ENCODE measurements at regions of chr11 and their contacts with region 1.

Region 1: DNA sequence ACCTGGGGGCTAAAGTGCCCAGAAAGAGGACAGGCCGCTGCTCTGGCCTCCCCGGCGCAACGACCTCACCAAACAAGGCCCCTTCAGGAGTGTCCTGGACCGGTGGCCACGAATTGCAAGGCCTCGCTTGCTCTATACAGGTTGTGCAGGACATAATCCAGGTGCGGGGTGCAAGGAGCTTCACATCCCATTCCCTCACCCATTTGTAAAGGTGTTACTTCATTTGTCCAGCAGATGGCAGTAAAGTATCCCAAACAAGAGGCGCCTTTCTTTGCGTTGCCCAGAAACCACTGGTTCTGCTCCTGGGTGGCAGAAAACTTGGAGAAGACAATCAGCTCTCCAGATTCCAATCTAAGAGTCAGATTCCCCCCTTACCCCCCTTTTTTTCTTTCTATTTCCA is 35.9 kb upstream of the PRDM11 start:
- DNase-seq: no peak
- ATAC-seq: peak; percentile 81
- H3K4me3 ChIP-seq: no peak overlapping the region
- H3K27ac ChIP-seq: no peak overlapping the region
- H3K4me1 ChIP-seq: no peaks in the 10 kb centered on the region
- H3K27me3 ChIP-seq: no peaks in the 10 kb centered on the region

Region 2: DNA sequence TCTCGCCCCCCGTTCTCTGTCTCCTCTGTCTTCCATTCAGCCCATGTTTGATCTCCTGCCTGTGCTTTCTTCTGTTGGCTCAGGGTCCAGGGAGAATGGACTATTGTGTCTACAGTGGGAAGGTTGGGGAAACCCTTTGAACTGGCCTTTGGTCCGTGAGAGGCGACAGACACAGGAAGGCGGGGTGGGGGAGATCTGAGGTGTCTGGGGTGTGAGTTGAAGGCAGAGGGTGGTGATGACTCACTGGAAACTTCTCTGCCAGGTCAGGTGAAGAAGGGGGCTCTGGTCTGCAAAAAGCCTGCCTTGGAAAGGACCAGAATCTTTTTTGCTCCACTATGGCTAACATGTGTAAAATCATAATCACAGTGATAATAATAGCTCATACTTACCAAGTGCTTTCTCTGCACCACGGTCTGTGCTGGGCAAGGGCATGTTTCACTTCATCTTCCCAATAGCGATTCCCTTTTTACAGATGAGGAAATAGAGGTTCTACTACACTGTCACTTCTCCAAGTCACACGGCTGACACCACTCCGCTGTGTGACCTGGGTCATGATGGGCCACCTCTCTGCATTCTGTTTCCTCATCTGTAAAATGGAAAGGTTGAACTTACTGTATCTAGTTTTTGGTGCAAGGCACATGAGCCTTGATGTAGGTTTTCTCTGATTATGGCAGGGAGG is 700.9 kb before region 1 on chr11:
- intact Hi-C with region 1: no loop called
- DNase-seq: no peak
- ATAC-seq: no peak
- H3K4me3 ChIP-seq: no peak overlapping the region
- H3K27ac ChIP-seq: no peak overlapping the region
- H3K4me1 ChIP-seq: no peaks in the 10 kb centered on the region
- H3K27me3 ChIP-seq: no peaks in the 10 kb centered on the region

Region 3: GRCh38 chr11:45233121-45233803 is 122.7 kb after region 1 on chr11:
- intact Hi-C with region 1: loop called (anchors 10 kb)
- DNase-seq: peak; percentile 77 to 87
- ATAC-seq: peak; percentile 63
- H3K4me3 ChIP-seq: no peak overlapping the region
- H3K27ac ChIP-seq: no peak overlapping the region
- H3K4me1 ChIP-seq: no peaks in the 10 kb centered on the region
- H3K27me3 ChIP-seq: no peaks in the 10 kb centered on the region

Region 4: DNA sequence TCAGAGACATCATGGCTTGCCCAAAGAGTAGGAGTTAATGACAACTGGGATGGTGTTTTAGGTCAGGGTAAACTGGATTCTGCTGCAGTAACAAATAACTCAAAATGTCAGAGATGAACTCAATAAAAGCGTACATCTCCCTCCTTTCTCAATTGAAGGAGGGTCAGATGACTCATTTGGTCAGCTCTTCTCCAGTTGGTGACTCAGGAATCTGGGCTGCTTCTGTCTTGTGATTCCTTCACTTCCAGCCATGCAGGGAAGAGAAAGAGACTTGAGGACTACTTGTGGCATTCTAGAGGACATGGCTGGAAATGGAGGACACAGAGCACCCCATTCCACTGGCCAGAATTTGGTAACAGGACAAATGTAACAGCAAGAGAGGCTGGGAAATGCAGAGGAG is 178.8 kb after region 1 on chr11:
- intact Hi-C with region 1: loop called (anchors 1 to 2 kb)
- DNase-seq: no peak
- ATAC-seq: no peak
- H3K4me3 ChIP-seq: no peak overlapping the region
- H3K27ac ChIP-seq: no peak overlapping the region
- H3K4me1 ChIP-seq: no peaks in the 10 kb centered on the region
- H3K27me3 ChIP-seq: peaks cover 0 to 2% of the 10 kb centered on the region in 2 donors

Region 5: DNA sequence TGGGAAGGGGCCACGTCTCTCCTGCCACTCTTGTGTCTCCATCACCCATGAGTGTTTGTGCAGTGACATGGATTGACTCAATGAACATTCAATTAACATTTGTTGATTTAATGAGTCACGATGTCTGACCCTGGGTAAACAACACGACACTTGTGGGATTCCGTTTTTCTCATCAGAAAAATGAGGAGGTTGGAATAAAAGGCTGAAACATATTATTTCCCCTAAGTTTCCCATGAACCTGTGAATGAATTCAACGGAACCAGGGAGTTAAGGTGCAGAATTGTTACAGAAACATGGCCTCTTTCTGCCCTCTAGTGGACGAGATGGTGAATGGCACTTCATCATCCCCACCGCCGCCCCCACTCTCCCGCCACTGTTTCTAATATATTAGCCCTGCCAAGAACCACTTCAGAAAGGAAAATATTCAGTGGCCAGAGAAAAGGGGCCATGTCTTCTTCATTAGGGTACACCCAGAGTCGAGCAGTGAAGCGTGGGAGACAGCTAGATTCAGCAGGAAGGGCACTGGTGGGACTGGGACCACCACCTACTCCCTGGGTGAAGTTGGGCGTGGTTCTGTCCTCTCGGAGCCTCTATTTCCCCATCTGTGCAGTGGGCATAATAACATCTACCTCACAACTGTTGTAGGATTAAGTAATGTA is 221.8 kb after region 1 on chr11:
- intact Hi-C with region 1: loop called (anchors 1 to 2 kb)
- DNase-seq: no peak
- ATAC-seq: peak; percentile 85
- H3K4me3 ChIP-seq: no peak overlapping the region
- H3K27ac ChIP-seq: no peak overlapping the region
- H3K4me1 ChIP-seq: no peaks in the 10 kb centered on the region
- H3K27me3 ChIP-seq: no peaks in the 10 kb centered on the region